Mammary epithelial cell (primary cell): ENCODE measurements at regions of chr2 and their contacts with region 1.

Region 1: GRCh38 chr2:145350011-145350410 is 830.1 kb upstream of the ZEB2 start:
- DNase-seq: no peak
- H3K4me3 ChIP-seq: no peak overlapping the region
- H3K27ac ChIP-seq: no peak overlapping the region
- H3K4me1 ChIP-seq: no peaks in the 10 kb centered on the region
- H3K27me3 ChIP-seq: no peaks in the 10 kb centered on the region
- CTCF ChIP-seq: no peak

Region 2: GRCh38 chr2:144738749-144739148 is 611.3 kb before region 1 on chr2:
- CTCF ChIA-PET with region 1: interaction called, 24 read pairs
- dilution Hi-C with region 1: no loop called
- in situ Hi-C with region 1: no loop called
- intact Hi-C with region 1: no loop called
- DNase-seq: no peak
- H3K4me3 ChIP-seq: no peak overlapping the region
- H3K27ac ChIP-seq: no peak overlapping the region
- H3K4me1 ChIP-seq: no peaks in the 10 kb centered on the region
- H3K27me3 ChIP-seq: no peaks in the 10 kb centered on the region
- CTCF ChIP-seq: no peak